ENCODE measurements at regions of chr18 and their contacts with region 1.

Region 1: GRCh38 chr18:9925369-9925768 is 11.6 kb downstream of the VAPA start:
- DNase-seq: no peak
- H3K4me3 Mint-ChIP-seq: no peak overlapping the region
- H3K27ac Mint-ChIP-seq: no peak overlapping the region
- H3K4me1 Mint-ChIP-seq: peaks cover 38% of the 10 kb centered on the region
- H3K27me3 Mint-ChIP-seq: no peaks in the 10 kb centered on the region
- CTCF ChIP-seq: no peak

Region 2: GRCh38 chr18:9594823-9595596 is 330.4 kb before region 1 on chr18:
- CTCF ChIA-PET with region 1: no interaction called
- intact Hi-C with region 1: loop called (anchors 10 kb)
- DNase-seq: no peak
- H3K4me3 Mint-ChIP-seq: no peak overlapping the region
- H3K27ac Mint-ChIP-seq: no peak overlapping the region
- H3K4me1 Mint-ChIP-seq: peaks cover 32% of the 10 kb centered on the region
- H3K27me3 Mint-ChIP-seq: no peaks in the 10 kb centered on the region
- CTCF ChIP-seq: no peak

Region 3: GRCh38 chr18:9782073-9782857 is 143.1 kb before region 1 on chr18:
- CTCF ChIA-PET with region 1: no interaction called
- intact Hi-C with region 1: loop called (anchors 10 kb)
- DNase-seq: no peak
- H3K4me3 Mint-ChIP-seq: no peak overlapping the region
- H3K27ac Mint-ChIP-seq: no peak overlapping the region
- H3K4me1 Mint-ChIP-seq: peaks cover 11% of the 10 kb centered on the region
- H3K27me3 Mint-ChIP-seq: peaks cover 15% of the 10 kb centered on the region
- CTCF ChIP-seq: no peak

Region 4: GRCh38 chr18:10041180-10041579 is 115.8 kb after region 1 on chr18:
- CTCF ChIA-PET with region 1: no interaction called
- intact Hi-C with region 1: no loop called
- DNase-seq: no peak
- H3K4me3 Mint-ChIP-seq: no peak overlapping the region
- H3K27ac Mint-ChIP-seq: no peak overlapping the region
- H3K4me1 Mint-ChIP-seq: peaks cover 3% of the 10 kb centered on the region
- H3K27me3 Mint-ChIP-seq: peaks cover 8% of the 10 kb centered on the region
- CTCF ChIP-seq: no peak